Ascending aorta (tissue), 2 donors: ENCODE measurements at regions of chr2 and their contacts with region 1.

Region 1: DNA sequence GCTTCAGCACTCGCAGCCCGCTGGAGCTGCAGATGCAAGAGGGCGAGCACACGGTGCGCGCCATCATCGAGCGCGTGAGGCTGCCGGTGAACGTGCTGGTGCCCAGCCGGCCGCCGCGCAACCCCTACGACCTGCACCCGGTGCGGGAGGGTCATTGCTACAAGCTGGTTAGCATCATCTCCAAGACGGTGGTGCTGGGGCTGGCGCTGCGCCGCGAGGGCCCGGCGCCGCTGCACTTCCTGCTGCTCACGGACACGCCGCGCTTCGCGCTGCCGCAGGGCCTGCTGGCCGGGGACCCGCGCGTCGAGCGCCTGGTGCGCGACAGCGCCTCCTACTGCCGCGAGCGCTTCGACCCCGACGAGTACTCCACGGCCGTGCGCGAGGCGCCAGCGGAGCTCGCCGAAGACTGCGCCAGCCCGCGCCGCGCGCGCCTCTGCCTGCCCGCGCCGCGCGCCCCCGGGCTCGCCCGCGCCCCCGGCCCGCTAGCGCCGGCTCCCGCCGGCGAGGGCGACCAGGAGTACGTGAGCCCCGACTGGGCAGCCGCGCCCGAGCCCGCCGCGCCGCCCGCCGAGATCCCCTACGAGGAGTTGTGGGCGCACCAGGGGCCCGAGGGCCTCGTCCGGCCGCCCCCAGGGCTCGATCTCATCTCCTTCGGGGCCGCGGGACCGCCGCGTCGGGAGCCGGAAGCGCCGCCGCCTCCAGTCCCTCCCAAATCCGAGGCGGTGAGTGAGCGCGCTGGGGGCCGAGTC is 11.8 kb downstream of the GAREM2 start:
- DNase-seq: peak; percentile 19 to 89
- H3K4me3 ChIP-seq: peak overlapping the region; percentile 73 to 82
- H3K27ac ChIP-seq: peak overlapping the region; percentile 67 to 73
- H3K4me1 ChIP-seq: no peaks in the 10 kb centered on the region
- H3K27me3 ChIP-seq: no peaks in the 10 kb centered on the region
- CTCF ChIP-seq: peak; percentile 44 to 87 (median 58)

Region 2: DNA sequence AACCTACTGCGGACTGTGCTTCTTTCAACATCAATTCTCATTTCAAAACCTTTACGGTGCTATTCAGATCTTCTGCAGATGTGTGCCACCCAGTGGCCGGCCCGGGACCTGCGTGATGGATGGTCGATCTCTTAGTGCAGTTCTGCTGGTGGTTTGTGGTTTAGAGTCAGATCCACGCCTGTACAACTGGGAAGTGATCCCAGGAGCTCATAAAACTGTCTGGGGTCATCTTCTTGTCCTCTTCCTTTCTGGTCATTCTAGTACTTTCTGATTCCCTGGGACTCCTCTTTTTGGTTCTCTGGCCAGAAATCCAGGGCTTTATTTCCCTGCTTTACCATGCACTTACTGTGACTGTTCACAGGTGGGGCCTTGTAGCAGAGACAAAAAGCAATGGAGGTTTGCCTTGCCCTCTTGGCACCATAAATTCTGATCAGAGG is 145.4 kb after region 1 on chr2:
- intact Hi-C with region 1: loop called (anchors 5 kb)
- DNase-seq: peak; percentile 66 to 93
- H3K4me3 ChIP-seq: no peak overlapping the region
- H3K27ac ChIP-seq: no peak overlapping the region
- H3K4me1 ChIP-seq: no peaks in the 10 kb centered on the region
- H3K27me3 ChIP-seq: no peaks in the 10 kb centered on the region
- CTCF ChIP-seq: peak; percentile 70 to 90 (median 84)